ENCODE measurements at regions of chr5 and their contacts with region 1.

Region 1: DNA sequence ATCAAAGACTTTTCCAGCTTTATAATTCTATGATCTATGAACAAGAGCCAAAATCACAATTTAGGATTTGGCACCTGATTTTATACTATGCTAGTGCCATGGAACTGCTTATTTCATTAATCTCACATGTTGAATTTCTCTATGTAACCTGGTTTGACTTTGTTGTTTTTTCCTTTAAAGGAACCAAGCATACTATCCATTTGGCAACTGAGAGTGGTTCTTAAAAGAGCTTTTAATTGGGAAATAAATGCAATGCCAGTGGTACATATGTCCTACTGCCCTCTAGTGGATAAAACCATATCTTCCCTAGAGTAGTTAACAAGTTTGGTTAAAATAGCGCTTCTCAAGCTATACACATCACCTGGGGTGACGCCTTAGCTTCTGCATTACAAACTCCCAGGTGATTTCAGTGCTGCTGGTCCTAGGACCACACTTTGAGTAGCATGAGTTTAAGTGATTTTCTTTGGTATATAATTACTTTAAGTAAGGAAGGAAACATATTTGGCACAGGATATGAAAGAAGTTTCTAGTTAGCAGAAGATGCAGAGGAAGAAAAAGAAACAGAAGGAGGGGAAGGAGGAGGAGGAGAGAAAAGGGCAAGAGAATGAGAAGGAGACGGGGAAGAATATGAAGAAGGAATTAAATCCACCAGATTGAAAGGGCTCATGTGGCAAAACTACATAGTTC is 56.8 kb downstream of the FGF10 start:
- DNase-seq: peak; percentile 32
- H3K4me3 ChIP-seq: no peak overlapping the region
- H3K27ac ChIP-seq: no peak overlapping the region
- H3K4me1 ChIP-seq: no peaks in the 10 kb centered on the region
- H3K27me3 ChIP-seq: no peaks in the 10 kb centered on the region
- CTCF ChIP-seq: peak; percentile 65 to 73

Region 2: GRCh38 chr5:43631182-43631910 is 701.1 kb before region 1 on chr5:
- CTCF ChIA-PET with region 1: no interaction called
- dilution Hi-C with region 1: no loop called
- in situ Hi-C with region 1: no loop called
- intact Hi-C with region 1: loop called (anchors 10 kb)
- DNase-seq: peak; percentile 59
- H3K4me3 ChIP-seq: no peak overlapping the region
- H3K27ac ChIP-seq: no peak overlapping the region
- H3K4me1 ChIP-seq: peaks cover 4% of the 10 kb centered on the region
- H3K27me3 ChIP-seq: no peaks in the 10 kb centered on the region
- CTCF ChIP-seq: peak; percentile 62 to 65

Region 3: DNA sequence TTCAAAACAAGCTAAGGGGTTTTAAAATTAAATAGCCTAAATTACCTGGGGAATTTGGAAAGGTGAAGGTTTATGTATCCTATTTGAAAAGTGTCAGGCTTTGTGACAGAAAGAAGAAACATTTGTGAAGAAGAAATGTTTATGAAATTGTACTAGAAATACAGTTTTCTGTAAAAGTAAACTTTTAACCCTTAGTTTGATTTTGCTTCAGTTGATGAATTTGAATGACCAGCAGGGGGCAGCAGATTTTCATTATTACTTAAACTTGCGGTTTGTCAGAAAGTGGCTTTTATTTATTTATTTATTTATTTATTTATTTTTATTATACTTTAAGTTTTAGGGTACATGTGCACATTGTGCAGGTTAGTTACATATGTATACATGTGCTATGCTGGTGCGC is 671.3 kb before region 1 on chr5:
- CTCF ChIA-PET with region 1: no interaction called
- dilution Hi-C with region 1: no loop called
- in situ Hi-C with region 1: no loop called
- intact Hi-C with region 1: loop called (anchors 2 kb)
- DNase-seq: peak; percentile 5
- H3K4me3 ChIP-seq: no peak overlapping the region
- H3K27ac ChIP-seq: no peak overlapping the region
- H3K4me1 ChIP-seq: peaks cover 4% of the 10 kb centered on the region
- H3K27me3 ChIP-seq: no peaks in the 10 kb centered on the region
- CTCF ChIP-seq: peak; percentile 41 to 43

Region 4: DNA sequence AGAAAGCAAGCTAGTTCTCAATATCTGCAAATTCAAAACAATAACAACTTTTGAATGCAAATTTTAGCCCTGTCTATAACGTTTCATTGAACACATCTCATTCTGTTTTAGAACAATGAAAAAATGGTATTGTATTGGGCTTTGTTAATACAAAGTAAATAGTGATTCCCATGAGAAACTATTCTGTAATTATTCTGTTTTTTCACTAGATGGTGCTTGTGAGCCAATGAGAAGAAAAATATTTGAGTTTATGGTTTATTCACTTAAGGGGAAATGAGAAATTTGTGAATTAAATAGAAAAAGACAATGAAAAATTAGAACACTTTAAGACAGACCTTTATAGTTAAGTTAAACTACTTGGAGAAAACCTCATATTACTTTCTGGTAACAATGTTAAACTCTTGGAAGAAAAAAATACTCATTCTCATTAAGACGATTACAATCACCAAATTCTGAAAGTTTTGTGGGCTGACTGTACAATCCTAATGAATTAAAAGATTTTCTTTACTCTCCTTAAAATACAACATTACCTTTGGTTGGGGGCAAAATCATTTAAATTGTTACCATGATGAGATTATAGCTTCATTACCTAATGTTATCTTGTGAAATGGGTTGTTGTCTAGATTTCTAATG is 602.5 kb before region 1 on chr5:
- CTCF ChIA-PET with region 1: interaction called, 7 read pairs
- dilution Hi-C with region 1: no loop called
- in situ Hi-C with region 1: loop called (anchors 10 to 25 kb)
- intact Hi-C with region 1: loop called (anchors 1 kb)
- DNase-seq: peak; percentile 12
- H3K4me3 ChIP-seq: no peak overlapping the region
- H3K27ac ChIP-seq: no peak overlapping the region
- H3K4me1 ChIP-seq: no peaks in the 10 kb centered on the region
- H3K27me3 ChIP-seq: peaks cover 2% of the 10 kb centered on the region
- CTCF ChIP-seq: peak; percentile 41 to 53

Region 5: DNA sequence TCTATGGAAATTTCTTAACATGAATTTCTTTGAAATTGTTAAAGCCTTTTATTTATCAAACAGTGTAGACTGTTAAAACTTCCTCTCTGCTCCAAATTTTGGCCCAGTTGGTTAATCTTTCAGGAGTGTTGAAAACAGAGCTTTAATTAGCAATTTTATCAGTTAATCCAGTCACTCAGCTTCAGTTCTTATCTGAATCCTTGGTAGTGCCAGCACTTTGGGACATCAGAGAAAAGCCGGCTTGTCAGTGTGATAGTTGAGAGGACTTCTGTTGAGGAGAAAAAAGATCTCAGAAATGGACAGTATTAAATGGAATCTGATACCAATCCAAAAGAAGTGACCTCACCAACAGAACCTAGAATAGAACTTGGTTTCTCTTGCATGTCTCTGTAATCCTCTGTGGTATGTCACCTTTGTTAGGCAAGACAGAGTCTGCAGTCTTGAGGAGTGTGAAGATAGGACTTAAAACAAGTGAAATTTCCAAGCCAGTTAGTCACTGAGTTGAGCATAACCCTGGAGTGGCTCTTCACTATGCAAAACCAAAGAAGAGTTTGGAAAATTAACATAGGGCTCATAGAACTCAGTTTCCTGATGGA is 477.6 kb before region 1 on chr5:
- CTCF ChIA-PET with region 1: interaction called, 12 read pairs
- dilution Hi-C with region 1: no loop called
- in situ Hi-C with region 1: no loop called
- intact Hi-C with region 1: loop called (anchors 10 kb)
- DNase-seq: no peak
- H3K4me3 ChIP-seq: no peak overlapping the region
- H3K27ac ChIP-seq: no peak overlapping the region
- H3K4me1 ChIP-seq: no peaks in the 10 kb centered on the region
- H3K27me3 ChIP-seq: no peaks in the 10 kb centered on the region
- CTCF ChIP-seq: no peak

Region 6: DNA sequence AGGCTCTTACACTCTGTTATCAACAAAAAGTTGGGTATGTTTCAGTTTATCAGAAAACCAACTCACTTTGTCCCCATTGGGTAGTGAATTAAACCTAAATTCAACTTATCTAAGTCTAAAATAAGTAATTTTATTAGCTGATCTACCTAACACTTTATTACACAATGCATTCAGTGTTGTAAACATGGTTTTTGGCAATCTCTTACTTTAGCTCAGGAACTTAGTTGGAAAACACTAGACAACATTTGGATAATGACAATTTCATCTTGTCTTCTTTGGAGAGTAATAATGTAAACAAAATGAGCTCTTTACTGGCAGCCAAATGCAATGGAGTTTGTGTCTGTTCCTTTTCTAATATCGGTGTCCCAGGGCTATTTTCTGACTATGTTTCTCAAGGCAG is 23.8 kb after region 1 on chr5:
- CTCF ChIA-PET with region 1: no interaction called
- dilution Hi-C with region 1: no loop called
- in situ Hi-C with region 1: no loop called
- intact Hi-C with region 1: no loop called
- DNase-seq: no peak
- H3K4me3 ChIP-seq: no peak overlapping the region
- H3K27ac ChIP-seq: no peak overlapping the region
- H3K4me1 ChIP-seq: no peaks in the 10 kb centered on the region
- H3K27me3 ChIP-seq: no peaks in the 10 kb centered on the region
- CTCF ChIP-seq: no peak

Region 7: GRCh38 chr5:44402084-44402483 is 69.7 kb after region 1 on chr5:
- CTCF ChIA-PET with region 1: no interaction called
- dilution Hi-C with region 1: no loop called
- in situ Hi-C with region 1: no loop called
- intact Hi-C with region 1: no loop called
- DNase-seq: no peak
- H3K4me3 ChIP-seq: no peak overlapping the region
- H3K27ac ChIP-seq: no peak overlapping the region
- H3K4me1 ChIP-seq: no peaks in the 10 kb centered on the region
- H3K27me3 ChIP-seq: no peaks in the 10 kb centered on the region
- CTCF ChIP-seq: no peak

Region 8: DNA sequence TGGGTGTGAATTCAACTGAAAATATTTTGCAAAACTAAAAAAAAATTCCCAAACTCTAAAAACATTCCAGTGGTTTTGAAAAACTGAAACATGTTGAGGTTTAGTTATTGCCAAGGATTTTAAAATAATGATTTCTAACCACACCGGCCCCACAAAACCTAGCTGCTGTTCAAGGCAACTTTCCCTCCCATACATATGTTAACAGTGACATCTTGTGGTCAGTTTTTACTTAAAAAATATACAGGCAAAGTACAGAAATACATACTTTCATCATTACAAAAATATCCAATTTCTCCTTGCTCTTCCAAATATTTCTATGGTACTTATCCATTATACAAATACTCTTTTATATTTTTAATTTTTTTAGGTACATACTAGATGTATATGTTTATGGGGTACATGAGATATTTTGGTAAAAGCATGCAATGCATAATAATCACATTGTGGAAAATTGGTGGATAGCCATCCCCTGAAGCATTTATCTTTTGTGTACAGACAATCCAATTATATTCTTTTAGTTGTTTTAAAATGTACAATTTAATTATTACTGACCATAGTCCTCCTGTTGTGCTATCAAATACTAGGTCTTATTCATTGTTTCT is 442.0 kb after region 1 on chr5:
- CTCF ChIA-PET with region 1: no interaction called
- dilution Hi-C with region 1: no loop called
- in situ Hi-C with region 1: no loop called
- intact Hi-C with region 1: loop called (anchors 5 kb)
- DNase-seq: peak; percentile 27
- H3K4me3 ChIP-seq: no peak overlapping the region
- H3K27ac ChIP-seq: no peak overlapping the region
- H3K4me1 ChIP-seq: no peaks in the 10 kb centered on the region
- H3K27me3 ChIP-seq: no peaks in the 10 kb centered on the region
- CTCF ChIP-seq: peak; percentile 32 to 58